ENCODE measurements at regions of chr12 and their contacts with region 1.

Region 1: GRCh38 chr12:6272300-6273204 is 37.9 kb upstream of the PLEKHG6 start:
- DNase-seq: no peak
- ATAC-seq: no peak
- H3K4me3 ChIP-seq: no peak overlapping the region
- H3K27ac ChIP-seq: no peak overlapping the region
- H3K4me1 ChIP-seq: peaks cover 0 to 28% (median 12%) of the 10 kb centered on the region in 12 donors
- H3K27me3 ChIP-seq: no peaks in the 10 kb centered on the region
- CTCF ChIP-seq: no peak
- POLR2A ChIP-seq: no peak

Region 2: DNA sequence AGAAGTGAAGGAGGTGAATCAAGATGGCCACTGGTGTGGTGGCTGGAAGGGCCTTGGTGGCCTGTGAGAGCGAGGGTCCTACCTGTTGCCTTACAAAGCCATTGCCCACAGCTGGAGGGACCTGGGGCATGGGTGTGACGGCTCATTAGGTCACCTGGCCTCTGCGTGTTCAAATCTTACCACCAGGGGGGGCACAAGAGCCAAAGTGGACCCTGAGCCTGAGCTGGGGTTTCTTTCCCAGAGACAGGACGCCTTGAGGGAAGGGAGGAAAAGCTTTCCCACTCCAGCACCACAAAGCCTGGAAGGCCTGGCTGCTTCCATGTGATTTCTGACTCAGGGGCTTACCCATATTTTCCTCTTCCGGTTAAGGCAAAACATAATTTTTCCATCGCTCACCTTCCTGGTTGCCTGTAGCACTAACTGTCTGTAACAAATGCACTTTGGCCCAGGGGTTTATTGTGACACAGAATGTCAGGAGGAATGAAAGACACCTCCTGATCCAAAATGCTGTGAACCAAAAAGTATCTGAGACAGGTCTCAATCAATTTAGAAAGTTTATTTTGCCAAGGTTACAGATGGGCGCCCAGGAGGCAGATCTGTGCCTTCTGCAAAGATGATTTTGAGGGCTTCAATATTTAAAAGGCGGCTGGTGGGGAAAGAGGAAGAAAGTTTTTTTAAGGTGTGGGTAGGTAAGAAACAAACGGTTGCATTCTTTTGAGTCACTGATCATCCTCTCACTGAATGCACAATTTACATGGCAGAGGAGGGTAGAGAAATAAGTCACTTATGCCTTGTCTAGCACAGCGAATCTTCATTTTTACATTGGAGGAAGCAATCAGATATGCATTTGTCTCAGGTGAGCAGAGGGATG is 76.7 kb before region 1 on chr12:
- intact Hi-C with region 1: no loop called
- DNase-seq: peak; percentile 80 to 88 (median 88)
- ATAC-seq: peak; percentile 78 to 85 (median 81)
- H3K4me3 ChIP-seq: no peak overlapping the region
- H3K27ac ChIP-seq: peak overlapping the region; percentile 24 to 80 (median 52)
- H3K4me1 ChIP-seq: peaks cover 0 to 36% (median 13%) of the 10 kb centered on the region in 12 donors
- H3K27me3 ChIP-seq: peaks cover 0 to 12% (median 0%) of the 10 kb centered on the region in 9 donors
- CTCF ChIP-seq: peak; percentile 90 to 96 (median 94)
- POLR2A ChIP-seq: no peak

Region 3: DNA sequence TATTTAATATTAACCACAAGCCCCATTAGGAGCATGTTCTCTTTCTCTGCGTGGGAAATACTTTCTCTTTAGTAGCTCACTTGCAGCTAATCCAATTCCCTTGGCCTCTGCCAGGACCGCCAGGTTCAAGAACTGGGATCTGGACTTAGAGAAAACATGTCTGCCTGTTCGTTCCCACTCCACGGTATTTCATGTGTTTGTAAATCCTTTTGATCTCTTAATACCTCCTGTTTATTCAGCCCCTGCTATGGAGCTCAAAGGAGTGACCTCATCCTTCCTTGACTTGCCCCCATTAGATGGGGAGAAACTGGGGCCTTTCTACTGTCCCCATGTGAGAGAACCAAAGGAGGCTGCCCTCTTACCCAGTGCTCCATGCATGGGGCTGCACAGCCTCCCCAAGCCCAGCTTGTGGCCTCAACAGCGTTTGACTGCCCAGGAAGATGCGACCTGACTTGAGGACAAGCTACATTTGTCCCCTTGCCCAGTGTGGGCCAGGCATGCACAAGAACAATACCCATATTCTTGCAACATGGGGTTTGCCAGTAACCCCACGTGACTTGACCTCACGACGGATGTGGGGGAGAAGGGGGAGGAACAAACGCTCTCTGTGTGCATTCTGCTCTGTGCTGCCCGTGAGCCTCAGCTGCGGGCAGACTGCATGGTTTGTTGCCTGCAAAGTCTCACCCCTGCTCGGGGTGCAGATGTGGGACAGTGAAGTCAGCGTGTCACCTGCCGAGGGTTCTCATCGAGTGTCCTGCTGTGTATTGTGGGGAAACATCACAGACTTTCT is 42.0 kb before region 1 on chr12:
- intact Hi-C with region 1: loop called in 6 of 10 experiments (anchors 5 kb)
- DNase-seq: peak; percentile 56 to 71 (median 61)
- ATAC-seq: peak in 2 of 4 donors; percentile 6 to 14
- H3K4me3 ChIP-seq: peak overlapping the region in 1 of 12 donors; percentile 1
- H3K27ac ChIP-seq: peak overlapping the region; percentile 67 to 96 (median 88)
- H3K4me1 ChIP-seq: peaks cover 35 to 100% (median 91%) of the 10 kb centered on the region in 12 donors
- H3K27me3 ChIP-seq: no peaks in the 10 kb centered on the region
- CTCF ChIP-seq: no peak
- POLR2A ChIP-seq: no peak

Region 4: GRCh38 chr12:6323340-6323994 is 50.9 kb after region 1 on chr12:
- intact Hi-C with region 1: no loop called
- DNase-seq: peak in 3 of 5 donors; percentile 59 to 77 (median 64)
- ATAC-seq: peak; percentile 46 to 77 (median 48)
- H3K4me3 ChIP-seq: peak overlapping the region in 10 of 12 donors; percentile 2 to 44 (median 21)
- H3K27ac ChIP-seq: peak overlapping the region; percentile 3 to 97 (median 80)
- H3K4me1 ChIP-seq: peaks cover 0 to 67% (median 50%) of the 10 kb centered on the region in 12 donors
- H3K27me3 ChIP-seq: no peaks in the 10 kb centered on the region
- CTCF ChIP-seq: peak; percentile 11 to 63 (median 46)
- POLR2A ChIP-seq: no peak

Measured in heart left ventricle (tissue), 16 donors.